Posterior vena cava (tissue), 2 donors: ENCODE measurements at regions of chr7 and their contacts with region 1.

Region 1: GRCh38 chr7:78020136-78020873 is 221.7 kb downstream of the PHTF2 start:
- DNase-seq: no peak

Region 2: GRCh38 chr7:79176859-79177477 is 1156.7 kb after region 1 on chr7:
- intact Hi-C with region 1: loop called in 1 of 2 experiments (anchors 10 kb)
- DNase-seq: no peak